A549 (cell line): ENCODE measurements at regions of chr1 and their contacts with region 1.

Region 1: GRCh38 chr1:87292684-87293493 is 35.8 kb upstream of the LMO4 start:
- DNase-seq: peak; percentile 20 to 48
- ATAC-seq: peak; percentile 13 to 79; a peak in 3 of 6 replicates
- H3K4me3 ChIP-seq: no peak overlapping the region
- H3K27ac ChIP-seq: no peak overlapping the region
- H3K4me1 ChIP-seq: no peaks in the 10 kb centered on the region
- CTCF ChIP-seq: peak; percentile 80
- EP300 ChIP-seq: no peak
- POLR2A ChIP-seq: no peak
- RAD21 ChIP-seq: peak; percentile 78 to 79

Region 2: DNA sequence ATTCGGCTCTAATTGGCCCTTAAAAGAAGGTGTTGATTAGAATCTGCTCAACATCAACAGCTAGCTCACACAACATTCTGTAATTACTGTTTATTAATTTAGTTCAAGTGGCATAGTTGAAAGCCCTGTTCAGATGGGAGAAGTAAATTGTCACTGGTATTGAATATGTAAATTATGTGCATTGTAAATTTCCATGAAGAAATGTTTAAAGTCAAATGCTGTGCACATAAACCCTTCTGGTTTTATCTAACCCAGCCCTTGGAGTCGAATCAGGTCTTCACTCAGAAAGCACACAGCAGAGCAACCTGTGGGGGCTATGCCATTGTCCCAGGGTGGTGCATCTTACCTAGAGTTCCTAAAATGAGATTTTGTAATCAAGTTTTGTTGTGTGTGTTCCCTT is 29.6 kb before region 1 on chr1:
- CTCF ChIA-PET with region 1: no interaction called
- POLR2A ChIA-PET with region 1: no interaction called
- DNase-seq: no peak
- ATAC-seq: no peak
- H3K4me3 ChIP-seq: no peak overlapping the region
- H3K27ac ChIP-seq: no peak overlapping the region
- H3K4me1 ChIP-seq: no peaks in the 10 kb centered on the region
- CTCF ChIP-seq: no peak
- EP300 ChIP-seq: no peak
- POLR2A ChIP-seq: no peak
- RAD21 ChIP-seq: no peak

Region 3: GRCh38 chr1:87279966-87280535 is 12.8 kb before region 1 on chr1:
- CTCF ChIA-PET with region 1: interaction called, 10 read pairs
- POLR2A ChIA-PET with region 1: no interaction called
- DNase-seq: peak in 1 of 2 experiments; percentile 14
- ATAC-seq: no peak
- H3K4me3 ChIP-seq: no peak overlapping the region
- H3K27ac ChIP-seq: no peak overlapping the region
- H3K4me1 ChIP-seq: no peaks in the 10 kb centered on the region
- CTCF ChIP-seq: peak; percentile 27; the same call in 1 of the 3 replicates
- EP300 ChIP-seq: no peak
- POLR2A ChIP-seq: no peak
- RAD21 ChIP-seq: peak; percentile 21 to 52; a peak in 2 of 5 replicates

Region 4: DNA sequence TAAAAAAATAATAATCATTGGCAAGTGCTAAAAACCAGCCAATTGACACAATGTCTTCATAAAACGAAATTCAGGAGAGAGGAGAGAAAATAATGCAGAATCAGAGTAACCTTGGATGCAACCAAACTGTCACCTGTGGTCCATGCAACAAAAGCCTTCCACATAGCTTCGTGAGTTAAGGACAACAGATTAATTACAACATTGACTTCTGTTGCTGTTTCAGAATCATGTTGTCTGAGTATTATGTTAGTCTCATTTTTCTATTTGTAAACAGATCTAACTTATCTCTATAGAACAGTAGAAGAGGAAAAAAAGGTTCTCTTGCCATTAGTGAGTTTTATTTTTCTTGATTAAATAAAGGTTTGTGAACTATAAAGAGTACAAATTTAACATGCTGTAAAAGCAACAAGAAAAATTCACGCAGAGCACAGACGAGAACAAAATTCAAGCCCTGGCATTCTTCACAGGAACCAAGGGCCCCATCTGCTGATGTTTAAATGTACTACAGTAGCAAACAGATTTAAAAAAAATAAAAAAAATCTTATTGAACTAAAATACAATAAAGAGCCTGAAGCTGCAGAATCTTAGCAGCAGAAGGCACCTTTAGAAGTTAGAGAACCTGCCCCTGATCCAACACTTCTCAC is 1010.1 kb after region 1 on chr1:
- CTCF ChIA-PET with region 1: interaction called, 14 read pairs
- POLR2A ChIA-PET with region 1: no interaction called
- DNase-seq: peak in 1 of 2 experiments; percentile 17
- ATAC-seq: peak in 1 of 2 experiments; percentile 41; a peak in 1 of 6 replicates
- H3K4me3 ChIP-seq: no peak overlapping the region
- H3K27ac ChIP-seq: no peak overlapping the region
- H3K4me1 ChIP-seq: no peaks in the 10 kb centered on the region
- CTCF ChIP-seq: peak; percentile 54
- EP300 ChIP-seq: no peak
- POLR2A ChIP-seq: no peak
- RAD21 ChIP-seq: peak; percentile 66 to 80